Activated T-helper 1 cell treated with anti-CD3 and anti-CD28 coated beads, Interleukin-12 subunit alpha, Interleukin-12 subunit beta, Interleukin-2, Interleukin-4 antibody, amounts not matched to agents 30 ng/mL and 10 ng/mL and 1 ng/mL, durations not matched to agents 14 hours and 24 hours and 36 hours (primary cell): ENCODE measurements at regions of chr1 and their contacts with region 1.

Region 1: GRCh38 chr1:26582836-26583460 is 53.4 kb downstream of the RPS6KA1 start:
- DNase-seq: peak; percentile 37
- H3K4me3 Mint-ChIP-seq: peak overlapping the region; percentile 49
- H3K27ac Mint-ChIP-seq: peak overlapping the region; percentile 93
- H3K4me1 Mint-ChIP-seq: peaks cover 55% of the 10 kb centered on the region
- H3K27me3 Mint-ChIP-seq: no peaks in the 10 kb centered on the region

Region 2: DNA sequence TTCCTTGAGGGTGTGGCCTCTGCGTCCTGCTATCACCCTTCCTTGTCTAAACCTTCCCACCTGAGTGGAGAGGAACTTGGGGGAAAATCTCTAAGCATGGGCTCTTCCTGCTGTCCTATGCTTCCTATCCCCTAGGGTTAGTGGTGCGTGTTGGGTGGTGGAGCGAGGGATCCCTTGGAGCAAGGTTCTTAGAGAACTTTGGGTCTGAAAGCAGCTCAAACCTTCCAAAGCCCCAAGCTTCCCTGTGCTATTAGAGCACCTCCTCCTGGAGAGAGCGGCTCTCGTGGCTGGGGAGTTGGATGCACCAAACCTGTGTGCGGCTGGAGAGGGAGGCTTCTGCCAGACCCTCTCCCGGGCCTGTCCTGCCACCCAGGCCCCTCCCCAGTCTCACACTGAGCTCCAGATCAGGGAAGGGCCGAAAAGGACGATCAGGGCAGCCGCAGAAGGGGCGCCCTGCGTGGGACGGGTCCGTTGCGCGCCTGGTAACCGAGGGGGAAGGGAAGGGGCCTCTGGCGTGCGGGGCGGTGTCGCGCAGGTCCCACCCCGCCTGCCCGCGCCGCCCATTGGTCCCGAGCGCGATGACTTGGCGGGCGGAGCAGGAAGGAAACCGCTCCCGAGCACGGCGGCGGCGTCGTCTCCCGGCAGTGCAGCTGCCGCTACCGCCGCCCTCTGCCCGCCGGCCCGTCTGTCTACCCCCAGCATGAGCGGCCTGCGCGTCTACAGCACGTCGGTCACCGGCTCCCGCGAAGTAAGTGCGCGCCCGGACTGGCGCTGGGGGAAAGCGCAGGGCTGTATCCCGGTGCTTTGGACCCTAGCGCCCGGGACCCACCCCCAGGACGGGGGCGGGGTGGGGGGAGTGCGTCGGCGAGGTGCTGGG is 303.3 kb before region 1 on chr1 and contains the start of gene SH3BGRL3:
- intact Hi-C with region 1: loop called (anchors 2 kb)
- DNase-seq: peak; percentile 85
- H3K4me3 Mint-ChIP-seq: peak within 1 kb of the TSS; percentile 92
- H3K27ac Mint-ChIP-seq: peak within 1 kb of the TSS; percentile 99
- H3K4me1 Mint-ChIP-seq: peaks cover 78% of the 10 kb centered on the region
- H3K27me3 Mint-ChIP-seq: no peaks in the 10 kb centered on the region
- total RNA-seq, gene SH3BGRL3: 551 and 575 TPM in 2 replicates

Region 3: GRCh38 chr1:26500488-26501175 is 82.3 kb before region 1 on chr1:
- intact Hi-C with region 1: loop called (anchors 1 kb)
- DNase-seq: peak; percentile 84
- H3K4me3 Mint-ChIP-seq: peak overlapping the region; percentile 90
- H3K27ac Mint-ChIP-seq: peak overlapping the region; percentile 91
- H3K4me1 Mint-ChIP-seq: peaks cover 18% of the 10 kb centered on the region
- H3K27me3 Mint-ChIP-seq: no peaks in the 10 kb centered on the region

Region 4: GRCh38 chr1:26570287-26570686 is 12.7 kb before region 1 on chr1:
- intact Hi-C with region 1: loop called (anchors 1 kb)
- DNase-seq: no peak
- H3K4me3 Mint-ChIP-seq: no peak overlapping the region
- H3K27ac Mint-ChIP-seq: peak overlapping the region; percentile 50
- H3K4me1 Mint-ChIP-seq: peaks cover 31% of the 10 kb centered on the region
- H3K27me3 Mint-ChIP-seq: no peaks in the 10 kb centered on the region

Region 5: GRCh38 chr1:26695356-26696118 is 112.6 kb after region 1 on chr1 and contains the start of gene ARID1A:
- intact Hi-C with region 1: loop called (anchors 2 kb)
- DNase-seq: peak; percentile 96
- H3K4me3 Mint-ChIP-seq: peak within 1 kb of the TSS; percentile 90
- H3K27ac Mint-ChIP-seq: peak within 1 kb of the TSS; percentile 96
- H3K4me1 Mint-ChIP-seq: peaks cover 31% of the 10 kb centered on the region
- H3K27me3 Mint-ChIP-seq: no peaks in the 10 kb centered on the region
- total RNA-seq, gene ARID1A: 130 and 132 TPM in 2 replicates

Region 6: GRCh38 chr1:26833432-26834405 is 250.8 kb after region 1 on chr1:
- intact Hi-C with region 1: loop called (anchors 2 kb)
- DNase-seq: peak; percentile 89
- H3K4me3 Mint-ChIP-seq: peak overlapping the region; percentile 75
- H3K27ac Mint-ChIP-seq: peak overlapping the region; percentile 99
- H3K4me1 Mint-ChIP-seq: peaks cover 69% of the 10 kb centered on the region
- H3K27me3 Mint-ChIP-seq: no peaks in the 10 kb centered on the region

Region 7: DNA sequence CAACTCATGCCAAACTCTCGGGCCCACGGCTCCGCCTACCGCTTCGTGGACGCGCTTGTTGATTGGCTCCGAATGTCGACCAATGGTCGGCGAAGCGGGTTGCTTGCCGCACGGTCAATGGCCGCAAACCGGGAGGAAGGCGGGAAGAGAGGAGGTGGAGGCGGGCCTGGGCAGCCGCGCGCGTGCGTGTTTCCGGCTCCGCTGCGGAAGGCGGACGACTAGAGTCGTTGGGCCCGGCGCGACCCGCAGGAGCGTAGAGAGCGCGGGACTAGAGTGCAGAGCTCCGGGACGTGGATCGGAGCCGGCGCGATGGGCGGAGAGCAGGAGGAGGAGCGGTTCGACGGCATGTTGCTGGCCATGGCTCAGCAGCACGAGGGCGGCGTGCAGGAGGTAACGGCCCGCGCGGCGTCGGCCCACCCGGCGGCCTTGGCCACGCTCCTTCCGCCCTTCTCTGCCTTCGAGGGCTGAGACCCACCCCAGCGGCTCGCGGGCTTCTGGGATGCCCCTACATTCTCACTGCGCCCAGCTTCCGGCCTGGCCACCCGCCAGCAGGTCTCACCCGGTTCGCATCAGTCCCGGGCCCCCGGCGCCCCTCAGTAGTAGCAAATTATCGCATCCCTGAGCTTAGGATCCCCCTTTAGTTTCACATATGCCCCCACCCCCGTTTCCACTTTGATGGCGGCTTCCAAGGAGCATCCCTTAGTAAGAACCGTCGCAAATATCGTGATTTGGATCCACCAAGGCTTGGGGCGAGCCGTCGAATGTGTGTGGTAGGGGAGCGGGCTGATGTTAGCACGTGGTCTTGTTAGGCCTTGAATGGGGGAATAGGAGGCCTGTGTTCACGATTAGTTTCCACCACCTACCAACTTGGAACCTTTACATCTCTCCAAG is 338.8 kb after region 1 on chr1 and contains the start of gene NUDC:
- intact Hi-C with region 1: loop called (anchors 1 kb)
- DNase-seq: peak; percentile 97
- H3K4me3 Mint-ChIP-seq: peak within 1 kb of the TSS; percentile 97
- H3K27ac Mint-ChIP-seq: peak within 1 kb of the TSS; percentile 96
- H3K4me1 Mint-ChIP-seq: peaks cover 31% of the 10 kb centered on the region
- H3K27me3 Mint-ChIP-seq: peaks cover 2% of the 10 kb centered on the region
- total RNA-seq, gene NUDC: 151 and 152 TPM in 2 replicates